MCF 10A (cell line): ENCODE measurements at regions of chr1 and their contacts with region 1.

Region 1: GRCh38 chr1:211514030-211514754 is 22.2 kb upstream of the RD3 start:
- DNase-seq: peak; percentile 99
- H3K4me3 Mint-ChIP-seq: no peak overlapping the region
- H3K27ac Mint-ChIP-seq: peak overlapping the region; percentile 7
- H3K4me1 Mint-ChIP-seq: peaks cover 41% of the 10 kb centered on the region
- H3K27me3 Mint-ChIP-seq: no peaks in the 10 kb centered on the region
- CTCF ChIP-seq: peak; percentile 96

Region 2: GRCh38 chr1:210448297-210448892 is 1065.8 kb before region 1 on chr1:
- CTCF ChIA-PET with region 1: interaction called, 40 read pairs
- POLR2A ChIA-PET with region 1: no interaction called
- intact Hi-C with region 1: loop called (anchors 1 kb)
- DNase-seq: peak; percentile 71
- H3K4me3 Mint-ChIP-seq: no peak overlapping the region
- H3K27ac Mint-ChIP-seq: no peak overlapping the region
- H3K4me1 Mint-ChIP-seq: peaks cover 11% of the 10 kb centered on the region
- H3K27me3 Mint-ChIP-seq: peaks cover 52% of the 10 kb centered on the region
- CTCF ChIP-seq: peak; percentile 93

Region 3: GRCh38 chr1:211258756-211259637 is 255.2 kb before region 1 on chr1 and contains the start of gene RCOR3:
- CTCF ChIA-PET with region 1: interaction called, 7 read pairs
- POLR2A ChIA-PET with region 1: interaction called, 11 read pairs
- intact Hi-C with region 1: loop called (anchors 5 kb)
- DNase-seq: peak; percentile 96
- H3K4me3 Mint-ChIP-seq: peak within 1 kb of the TSS; percentile 88
- H3K27ac Mint-ChIP-seq: peak within 1 kb of the TSS; percentile 96
- H3K4me1 Mint-ChIP-seq: peaks cover 24% of the 10 kb centered on the region
- H3K27me3 Mint-ChIP-seq: no peaks in the 10 kb centered on the region
- CTCF ChIP-seq: peak; percentile 93
- total RNA-seq, gene RCOR3: 70.1 and 70.3 TPM in 2 replicates

Region 4: GRCh38 chr1:211382714-211383480 is 131.3 kb before region 1 on chr1:
- CTCF ChIA-PET with region 1: interaction called, 24 read pairs
- POLR2A ChIA-PET with region 1: interaction called, 7 read pairs
- intact Hi-C with region 1: loop called (anchors 1 kb)
- DNase-seq: peak; percentile 99
- H3K4me3 Mint-ChIP-seq: peak overlapping the region; percentile 82
- H3K27ac Mint-ChIP-seq: peak overlapping the region; percentile 98
- H3K4me1 Mint-ChIP-seq: peaks cover 26% of the 10 kb centered on the region
- H3K27me3 Mint-ChIP-seq: no peaks in the 10 kb centered on the region
- CTCF ChIP-seq: no peak

Region 5: DNA sequence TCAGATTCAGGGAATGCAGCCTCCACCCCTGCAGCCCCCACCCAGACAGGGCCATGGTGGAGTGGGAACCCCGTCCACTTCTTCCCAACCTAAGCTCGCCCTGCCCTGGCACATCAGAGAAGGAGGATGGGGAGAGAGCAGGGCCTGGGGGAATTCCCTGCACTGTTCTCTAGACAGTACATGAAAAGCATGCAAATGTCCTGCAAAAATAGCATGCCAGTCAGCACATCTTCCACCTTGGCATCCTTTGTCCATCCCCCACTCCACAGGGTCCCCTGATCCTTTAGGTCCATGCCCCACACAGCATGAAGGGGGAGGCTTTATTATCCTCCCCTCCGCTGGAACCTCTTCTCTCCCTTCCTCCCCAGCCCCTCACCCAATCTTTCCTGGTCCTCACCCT is 12.8 kb after region 1 on chr1:
- CTCF ChIA-PET with region 1: interaction called, 149 read pairs
- POLR2A ChIA-PET with region 1: interaction called, 3 read pairs
- intact Hi-C with region 1: no loop called
- DNase-seq: no peak
- H3K4me3 Mint-ChIP-seq: no peak overlapping the region
- H3K27ac Mint-ChIP-seq: peak overlapping the region; percentile 4
- H3K4me1 Mint-ChIP-seq: peaks cover 39% of the 10 kb centered on the region
- H3K27me3 Mint-ChIP-seq: no peaks in the 10 kb centered on the region
- CTCF ChIP-seq: no peak

Region 6: DNA sequence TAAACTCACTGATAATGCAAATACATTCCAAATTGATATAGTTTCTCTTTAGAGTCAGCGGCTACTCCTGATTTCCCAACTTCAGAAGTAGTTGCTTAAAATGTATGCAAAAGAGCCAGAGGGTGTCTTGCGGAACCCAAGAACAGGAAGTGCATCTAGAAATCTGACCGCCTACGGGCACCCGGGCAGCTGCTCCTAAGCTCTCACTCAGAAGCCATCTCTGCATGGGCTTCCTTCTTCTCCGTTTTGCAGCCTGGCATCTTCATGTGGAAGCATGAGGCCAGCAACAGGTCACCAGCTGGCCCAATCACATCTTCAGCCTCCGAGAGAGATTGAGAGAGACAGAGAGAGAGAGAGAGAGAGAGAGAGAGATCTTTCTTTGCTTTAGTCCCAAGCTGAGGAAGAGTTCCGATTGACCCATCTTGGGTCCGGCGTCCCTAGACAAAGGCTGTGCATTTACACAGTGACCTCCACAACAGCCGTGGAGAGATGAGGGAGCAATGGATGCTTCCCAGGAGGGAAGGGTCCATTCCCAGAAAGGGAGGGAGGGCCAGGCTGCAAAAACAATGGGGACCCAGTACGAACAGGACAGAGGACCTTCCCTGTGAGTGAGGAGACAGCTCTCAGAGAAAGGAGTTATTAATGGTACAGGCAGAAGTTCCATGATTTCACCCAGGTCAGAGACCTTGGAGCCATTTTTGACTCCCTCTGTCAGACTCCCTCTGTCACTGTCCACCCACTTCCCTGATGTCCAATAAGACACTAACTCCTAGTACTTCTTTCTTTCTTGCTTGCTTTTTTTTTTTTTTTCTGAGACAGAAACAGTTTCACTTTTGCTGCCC is 92.9 kb after region 1 on chr1:
- CTCF ChIA-PET with region 1: interaction called, 30 read pairs
- POLR2A ChIA-PET with region 1: no interaction called
- intact Hi-C with region 1: no loop called
- DNase-seq: peak; percentile 73
- H3K4me3 Mint-ChIP-seq: no peak overlapping the region
- H3K27ac Mint-ChIP-seq: no peak overlapping the region
- H3K4me1 Mint-ChIP-seq: peaks cover 40% of the 10 kb centered on the region
- H3K27me3 Mint-ChIP-seq: no peaks in the 10 kb centered on the region
- CTCF ChIP-seq: no peak

Region 7: GRCh38 chr1:211654838-211655787 is 140.9 kb after region 1 on chr1:
- CTCF ChIA-PET with region 1: interaction called, 418 read pairs
- POLR2A ChIA-PET with region 1: interaction called, 19 read pairs
- intact Hi-C with region 1: loop called (anchors 1 kb)
- DNase-seq: peak; percentile 95
- H3K4me3 Mint-ChIP-seq: no peak overlapping the region
- H3K27ac Mint-ChIP-seq: no peak overlapping the region
- H3K4me1 Mint-ChIP-seq: peaks cover 26% of the 10 kb centered on the region
- H3K27me3 Mint-ChIP-seq: no peaks in the 10 kb centered on the region
- CTCF ChIP-seq: peak; percentile 100

Region 8: GRCh38 chr1:211775170-211775569 is 261.0 kb after region 1 on chr1:
- CTCF ChIA-PET with region 1: no interaction called
- POLR2A ChIA-PET with region 1: no interaction called
- intact Hi-C with region 1: no loop called
- DNase-seq: peak; percentile 57
- H3K4me3 Mint-ChIP-seq: no peak overlapping the region
- H3K27ac Mint-ChIP-seq: no peak overlapping the region
- H3K4me1 Mint-ChIP-seq: no peaks in the 10 kb centered on the region
- H3K27me3 Mint-ChIP-seq: no peaks in the 10 kb centered on the region
- CTCF ChIP-seq: no peak